IMR-90 (cell line): ENCODE measurements at regions of chr3 and their contacts with region 1.

Region 1: DNA sequence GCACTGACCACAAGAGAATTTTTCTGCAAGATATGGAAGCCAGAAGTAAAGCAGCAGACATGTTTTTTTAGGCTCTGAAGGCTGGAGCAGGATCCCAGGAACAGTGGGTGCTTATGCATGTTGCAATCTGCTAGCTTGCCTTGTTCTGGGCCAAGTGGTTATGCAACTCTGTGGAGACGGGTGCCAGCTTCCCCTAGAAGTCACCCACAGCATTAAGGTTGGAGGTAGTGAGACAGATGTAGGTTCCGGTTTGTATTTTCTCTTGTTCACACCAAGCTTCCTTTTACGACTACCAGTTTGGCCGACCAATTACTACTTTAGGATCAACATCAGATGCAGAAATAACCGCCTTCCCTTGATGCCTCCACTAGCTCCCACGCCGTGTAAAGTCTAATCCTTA is 11.1 kb downstream of the DPH3 start:
- DNase-seq: no peak
- ATAC-seq: no peak
- H3K4me3 ChIP-seq: no peak overlapping the region
- H3K27ac ChIP-seq: no peak overlapping the region
- H3K4me1 ChIP-seq: no peaks in the 10 kb centered on the region
- H3K27me3 ChIP-seq: no peaks in the 10 kb centered on the region
- CTCF ChIP-seq: no peak
- POLR2A ChIP-seq: no peak
- RAD21 ChIP-seq: no peak

Region 2: GRCh38 chr3:15500107-15500724 is 753.4 kb before region 1 on chr3:
- CTCF ChIA-PET with region 1: no interaction called
- POLR2A ChIA-PET with region 1: no interaction called
- dilution Hi-C with region 1: no loop called
- in situ Hi-C with region 1: no loop called
- intact Hi-C with region 1: no loop called
- DNase-seq: no peak
- ATAC-seq: peak; percentile 27; the same call in 1 of the 2 replicates
- H3K4me3 ChIP-seq: no peak overlapping the region
- H3K27ac ChIP-seq: no peak overlapping the region
- H3K4me1 ChIP-seq: no peaks in the 10 kb centered on the region
- H3K27me3 ChIP-seq: no peaks in the 10 kb centered on the region
- CTCF ChIP-seq: no peak
- POLR2A ChIP-seq: no peak
- RAD21 ChIP-seq: no peak

Region 3: DNA sequence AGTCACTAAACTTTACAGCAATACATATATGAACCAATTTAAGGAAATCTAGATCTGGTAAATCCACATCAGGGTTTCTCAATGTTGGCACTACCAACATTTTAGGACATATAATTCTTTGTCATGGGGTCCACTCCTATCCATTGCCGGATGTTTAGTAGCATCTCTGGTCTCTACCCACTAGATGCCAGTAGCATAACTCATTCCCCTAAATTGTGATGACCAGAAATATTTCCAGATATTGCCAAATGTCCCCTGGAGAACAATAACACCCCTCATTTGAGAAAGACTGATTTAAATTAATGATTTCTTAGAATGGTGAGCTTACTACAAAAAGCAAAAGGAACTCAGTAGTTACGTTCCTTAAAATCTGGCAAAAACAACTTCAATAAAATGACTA is 432.7 kb before region 1 on chr3:
- CTCF ChIA-PET with region 1: interaction called, 3 read pairs
- POLR2A ChIA-PET with region 1: no interaction called
- dilution Hi-C with region 1: no loop called
- in situ Hi-C with region 1: loop called (anchors 5 kb)
- intact Hi-C with region 1: no loop called
- DNase-seq: no peak
- ATAC-seq: no peak
- H3K4me3 ChIP-seq: no peak overlapping the region
- H3K27ac ChIP-seq: no peak overlapping the region
- H3K4me1 ChIP-seq: 0 out of 2 replicates have a peak, but pooled peaks cover under 1% of the 10 kb centered on the region
- H3K27me3 ChIP-seq: no peaks in the 10 kb centered on the region
- CTCF ChIP-seq: peak; percentile 20; the same call in 1 of the 2 replicates
- POLR2A ChIP-seq: no peak
- RAD21 ChIP-seq: no peak; the same call in 1 of the 2 replicates

Region 4: GRCh38 chr3:16570113-16570512 is 316.5 kb after region 1 on chr3:
- CTCF ChIA-PET with region 1: no interaction called
- POLR2A ChIA-PET with region 1: no interaction called
- dilution Hi-C with region 1: no loop called
- in situ Hi-C with region 1: no loop called
- intact Hi-C with region 1: no loop called
- DNase-seq: no peak
- ATAC-seq: no peak
- H3K4me3 ChIP-seq: no peak overlapping the region
- H3K27ac ChIP-seq: no peak overlapping the region
- H3K4me1 ChIP-seq: no peaks in the 10 kb centered on the region
- H3K27me3 ChIP-seq: peaks cover 23% of the 10 kb centered on the region
- CTCF ChIP-seq: no peak
- POLR2A ChIP-seq: no peak
- RAD21 ChIP-seq: no peak